GM18951 (cell line): ENCODE measurements at regions of chr16 and their contacts with region 1.

Region 1: GRCh38 chr16:69930117-69930776 is 20.9 kb upstream of the CLEC18A start:
- POLR2A ChIP-seq: no peak

Region 2: GRCh38 chr16:69270395-69270794 is 659.9 kb before region 1 on chr16:
- in situ Hi-C with region 1: no loop called
- POLR2A ChIP-seq: no peak

Region 3: DNA sequence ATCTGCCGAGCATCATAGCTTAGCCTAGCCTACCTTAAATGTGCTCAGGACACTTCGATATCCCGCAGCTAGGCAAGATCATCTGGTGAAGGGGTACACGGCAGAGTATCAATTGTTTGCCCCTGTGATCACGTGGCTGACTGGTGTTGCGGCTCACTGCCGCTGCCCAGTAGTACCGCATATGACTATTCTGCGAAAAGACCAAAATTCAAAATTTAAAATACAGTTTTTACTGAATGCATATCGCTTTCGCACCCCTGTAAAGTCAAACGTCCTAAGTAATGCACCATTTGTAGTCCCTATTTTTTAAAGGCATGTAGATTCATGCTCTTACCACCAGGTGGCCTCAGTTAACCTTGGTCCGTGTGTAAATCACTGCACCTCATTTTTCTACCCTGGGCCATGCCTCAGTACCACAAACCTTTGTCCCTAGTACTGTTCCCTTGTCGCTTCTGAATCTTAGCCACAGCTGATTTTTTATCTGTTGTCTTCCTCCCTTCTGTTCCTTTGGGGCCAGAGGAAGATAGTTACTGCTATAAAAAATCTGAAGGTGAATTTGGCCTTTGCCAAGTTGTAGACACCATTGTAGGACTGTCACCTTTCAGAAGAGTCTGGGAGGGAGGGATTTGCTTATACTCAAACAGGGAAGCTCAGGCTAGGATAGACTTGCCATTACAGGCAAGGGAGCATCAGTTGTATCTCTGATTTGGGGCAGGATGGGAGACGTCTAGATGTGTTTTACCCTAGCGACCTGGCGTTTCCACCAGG is 133.7 kb before region 1 on chr16:
- in situ Hi-C with region 1: loop called (anchors 5 kb)
- POLR2A ChIP-seq: no peak